Posterior cingulate gyrus (tissue), 11 donors: ENCODE measurements at regions of chr16 and their contacts with region 1.

Region 1: GRCh38 chr16:15704545-15704987 is 54.5 kb downstream of the NDE1 start:
- DNase-seq: peak; percentile 43 to 96 (median 86)

Region 2: DNA sequence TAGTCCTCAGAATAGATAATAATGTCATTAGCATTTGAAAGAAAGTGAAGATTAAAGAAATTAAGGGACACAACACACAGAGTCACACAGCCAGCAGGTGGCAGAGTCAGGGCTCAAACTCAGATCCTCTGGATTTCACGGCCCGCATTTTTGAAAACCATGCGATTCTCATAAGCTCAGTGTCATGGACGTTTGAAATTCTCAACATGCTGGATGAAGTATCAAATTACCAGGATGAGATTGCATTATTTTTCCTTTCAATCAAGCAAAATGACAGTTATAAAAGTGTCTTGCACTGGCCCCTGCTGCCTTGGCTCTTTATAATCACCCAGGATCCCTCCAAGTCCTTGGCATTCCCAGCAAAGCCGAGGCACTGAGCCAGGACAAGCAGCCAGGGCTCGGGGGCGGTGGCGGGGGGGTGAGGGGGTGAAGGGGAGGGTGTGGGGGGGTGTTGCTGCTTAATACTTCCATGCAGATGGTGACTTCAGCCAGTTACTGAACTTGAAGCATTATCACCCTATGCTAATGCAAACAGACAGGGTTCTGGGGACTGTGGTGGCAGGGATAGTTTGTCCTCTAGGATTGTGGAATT is 276.8 kb before region 1 on chr16:
- intact Hi-C with region 1: loop called (anchors 10 kb)
- DNase-seq: peak in 9 of 10 donors; percentile 29 to 93 (median 60)

Region 3: DNA sequence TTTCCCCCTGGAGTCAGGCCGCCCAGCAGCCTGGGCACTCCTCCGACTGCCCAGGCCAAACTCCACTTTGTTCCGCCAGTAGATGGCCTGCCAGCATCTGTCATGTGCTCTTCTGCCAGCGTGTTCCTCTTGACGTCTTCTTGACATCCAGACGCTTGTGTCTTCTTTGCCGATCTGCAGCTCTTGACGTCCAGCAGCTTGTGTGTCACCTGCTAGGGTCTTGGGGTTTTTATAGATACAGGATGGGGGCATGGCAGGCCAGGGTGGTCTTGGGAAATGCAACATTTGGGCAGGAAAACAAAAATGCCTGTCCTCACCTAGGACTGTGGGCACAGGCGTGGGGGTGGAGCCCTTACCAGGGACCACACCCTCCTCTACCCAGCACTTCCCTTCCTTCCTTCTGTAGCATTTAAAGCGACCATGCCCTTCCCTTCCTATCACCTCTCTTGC is 181.4 kb before region 1 on chr16:
- intact Hi-C with region 1: loop called (anchors 10 kb)
- DNase-seq: peak in 9 of 10 donors; percentile 15 to 94 (median 51)

Region 4: GRCh38 chr16:15572329-15573001 is 132.1 kb before region 1 on chr16:
- intact Hi-C with region 1: no loop called
- DNase-seq: no peak

Region 5: GRCh38 chr16:15607700-15608396 is 96.7 kb before region 1 on chr16:
- intact Hi-C with region 1: loop called (anchors 10 kb)
- DNase-seq: peak in 1 of 10 donors; percentile 75

Region 6: GRCh38 chr16:15643048-15643945 is 61.3 kb before region 1 on chr16 and contains the start of gene MARF1:
- intact Hi-C with region 1: loop called (anchors 1 kb)
- DNase-seq: peak; percentile 93 to 99 (median 97)

Region 7: GRCh38 chr16:15811481-15812400 is 107.2 kb after region 1 on chr16:
- intact Hi-C with region 1: no loop called
- DNase-seq: peak in 1 of 10 donors; percentile 30

Region 8: GRCh38 chr16:15847611-15848175 is 143.1 kb after region 1 on chr16:
- intact Hi-C with region 1: no loop called
- DNase-seq: no peak